Heart right ventricle (tissue), 16 donors: ENCODE measurements at regions of chr4 and their contacts with region 1.

Region 1: DNA sequence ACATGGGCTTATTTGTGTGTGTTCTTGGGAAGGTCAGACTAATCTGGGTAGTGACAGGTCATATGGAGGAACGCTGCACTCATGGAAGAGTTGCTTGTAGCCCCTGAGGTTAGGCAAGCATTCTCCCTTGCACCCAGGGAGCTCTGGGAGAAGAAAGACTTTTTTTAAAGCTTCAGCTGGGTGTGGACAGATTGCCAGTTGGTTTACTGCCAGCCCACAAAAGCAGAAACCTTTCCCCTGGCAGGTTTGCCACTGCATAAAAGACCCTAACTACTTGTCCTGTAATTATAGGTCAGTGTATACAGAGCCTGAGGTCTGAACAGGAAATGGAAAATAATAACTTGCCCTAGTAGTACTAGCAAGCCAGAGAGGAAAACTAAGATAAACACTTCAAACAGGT is 7.4 kb upstream of the NFKB1 start:
- DNase-seq: no peak
- ATAC-seq: no peak
- H3K4me3 ChIP-seq: no peak overlapping the region
- H3K27ac ChIP-seq: no peak overlapping the region
- H3K4me1 ChIP-seq: peaks cover 0 to 8% (median 0%) of the 10 kb centered on the region in 9 donors
- H3K27me3 ChIP-seq: no peaks in the 10 kb centered on the region
- CTCF ChIP-seq: no peak

Region 2: GRCh38 chr4:101621120-101621519 is 872.7 kb before region 1 on chr4:
- intact Hi-C with region 1: loop called in 1 of 10 experiments (anchors 5 kb)
- DNase-seq: no peak
- ATAC-seq: peak in 1 of 8 donors; percentile 35
- H3K4me3 ChIP-seq: no peak overlapping the region
- H3K27ac ChIP-seq: no peak overlapping the region
- H3K4me1 ChIP-seq: no peaks in the 10 kb centered on the region
- H3K27me3 ChIP-seq: no peaks in the 10 kb centered on the region
- CTCF ChIP-seq: no peak

Region 3: GRCh38 chr4:102454981-102455685 is 38.7 kb before region 1 on chr4:
- intact Hi-C with region 1: no loop called
- DNase-seq: no peak
- ATAC-seq: no peak
- H3K4me3 ChIP-seq: no peak overlapping the region
- H3K27ac ChIP-seq: no peak overlapping the region
- H3K4me1 ChIP-seq: no peaks in the 10 kb centered on the region
- H3K27me3 ChIP-seq: peaks cover 0 to 2% (median 0%) of the 10 kb centered on the region in 7 donors
- CTCF ChIP-seq: no peak